Activated B cell treated with CpG ODN at 0.5 μM for 24 hours (primary cell): ENCODE measurements at regions of chr14 and their contacts with region 1.

Region 1: DNA sequence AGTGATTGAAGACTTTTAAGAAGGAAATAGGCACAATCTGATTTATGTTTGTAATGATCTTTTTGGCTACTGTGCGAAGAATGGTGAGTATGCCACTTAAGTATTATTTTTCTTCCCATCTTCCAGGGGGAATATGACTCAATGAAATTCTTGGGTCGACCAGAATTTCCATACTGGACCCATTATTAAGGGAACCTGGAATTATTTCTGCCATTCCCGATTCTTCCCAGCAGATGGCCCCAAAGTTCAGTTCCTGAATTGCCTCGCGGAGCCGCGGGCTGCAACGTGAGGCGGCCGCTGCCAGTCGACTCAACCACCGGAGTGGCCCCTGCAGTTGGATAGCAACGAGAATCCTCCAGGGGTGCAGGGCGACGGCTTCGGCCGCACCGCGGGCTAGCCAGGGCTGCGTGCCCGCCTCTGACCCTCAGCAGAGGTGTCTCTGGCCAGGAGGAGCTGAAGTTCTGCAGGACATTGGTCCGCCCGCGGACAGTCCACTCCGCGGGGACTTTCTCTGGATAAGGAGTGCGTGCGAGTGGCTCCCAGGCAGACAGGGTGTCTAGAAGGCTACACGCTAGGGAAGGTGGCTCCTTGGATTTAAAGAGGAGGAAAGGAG is 628 bp upstream of the TSHR start:
- DNase-seq: peak; percentile 56
- ATAC-seq: peak; percentile 57
- H3K4me3 Mint-ChIP-seq: peak overlapping the region; percentile 84
- H3K27ac Mint-ChIP-seq: peak overlapping the region; percentile 36
- H3K4me1 Mint-ChIP-seq: peaks cover 48% of the 10 kb centered on the region
- H3K27me3 Mint-ChIP-seq: peaks cover 9% of the 10 kb centered on the region
- CTCF ChIP-seq: no peak

Region 2: GRCh38 chr14:80941241-80942182 is 13.3 kb before region 1 on chr14 and contains the start of gene CEP128:
- CTCF ChIA-PET with region 1: interaction called, 3 read pairs
- POLR2A ChIA-PET with region 1: interaction called, 9 read pairs
- intact Hi-C with region 1: loop called (anchors 1 kb)
- DNase-seq: peak; percentile 70
- ATAC-seq: peak; percentile 95
- H3K4me3 Mint-ChIP-seq: peak within 1 kb of the TSS; percentile 90
- H3K27ac Mint-ChIP-seq: peak within 1 kb of the TSS; percentile 70
- H3K4me1 Mint-ChIP-seq: peaks cover 32% of the 10 kb centered on the region
- H3K27me3 Mint-ChIP-seq: peaks cover 3% of the 10 kb centered on the region
- CTCF ChIP-seq: no peak
- total RNA-seq, gene CEP128: 21.1 and 25.0 TPM in 2 replicates

Region 3: DNA sequence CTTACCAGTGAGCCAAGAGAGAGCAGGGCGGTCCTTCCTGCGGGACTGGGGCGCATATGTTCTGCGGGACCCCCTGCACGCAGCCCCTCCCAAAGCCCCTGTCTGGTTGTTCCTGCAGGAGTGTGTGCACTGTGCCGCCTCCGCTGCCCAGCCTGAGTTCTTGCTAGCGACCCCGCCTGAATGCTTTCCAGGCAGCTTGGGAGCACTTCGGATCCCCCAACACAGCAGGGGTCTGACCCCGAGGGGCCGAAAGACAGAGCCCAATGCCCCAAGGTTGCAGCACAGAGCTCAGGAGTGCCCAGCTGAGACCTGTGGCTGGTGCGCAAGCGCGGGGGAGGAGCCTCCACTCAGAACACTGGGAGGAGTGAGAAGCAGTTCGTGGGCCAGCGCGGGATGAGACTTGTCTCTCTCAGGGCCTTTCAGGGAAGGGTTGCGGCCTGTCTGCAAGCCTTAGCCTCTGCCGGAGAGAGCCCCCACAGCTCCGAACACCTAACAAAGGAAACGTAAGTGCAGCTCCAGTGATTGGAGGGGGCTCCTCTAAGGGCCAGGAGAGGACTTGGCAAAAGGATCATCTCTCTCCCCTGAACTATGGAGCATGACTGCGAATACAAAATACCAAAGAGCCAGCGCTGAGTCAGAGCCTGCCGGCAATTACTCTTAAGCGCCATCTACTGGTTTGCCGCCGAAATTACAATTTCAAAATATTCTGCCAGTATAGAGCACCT is 215.5 kb after region 1 on chr14:
- CTCF ChIA-PET with region 1: interaction called, 9 read pairs
- POLR2A ChIA-PET with region 1: interaction called, 7 read pairs
- intact Hi-C with region 1: loop called (anchors 1 kb)
- DNase-seq: peak; percentile 79
- ATAC-seq: peak; percentile 98
- H3K4me3 Mint-ChIP-seq: peak overlapping the region; percentile 90
- H3K27ac Mint-ChIP-seq: peak overlapping the region; percentile 97
- H3K4me1 Mint-ChIP-seq: peaks cover 42% of the 10 kb centered on the region
- H3K27me3 Mint-ChIP-seq: no peaks in the 10 kb centered on the region
- CTCF ChIP-seq: peak; percentile 49

Region 4: DNA sequence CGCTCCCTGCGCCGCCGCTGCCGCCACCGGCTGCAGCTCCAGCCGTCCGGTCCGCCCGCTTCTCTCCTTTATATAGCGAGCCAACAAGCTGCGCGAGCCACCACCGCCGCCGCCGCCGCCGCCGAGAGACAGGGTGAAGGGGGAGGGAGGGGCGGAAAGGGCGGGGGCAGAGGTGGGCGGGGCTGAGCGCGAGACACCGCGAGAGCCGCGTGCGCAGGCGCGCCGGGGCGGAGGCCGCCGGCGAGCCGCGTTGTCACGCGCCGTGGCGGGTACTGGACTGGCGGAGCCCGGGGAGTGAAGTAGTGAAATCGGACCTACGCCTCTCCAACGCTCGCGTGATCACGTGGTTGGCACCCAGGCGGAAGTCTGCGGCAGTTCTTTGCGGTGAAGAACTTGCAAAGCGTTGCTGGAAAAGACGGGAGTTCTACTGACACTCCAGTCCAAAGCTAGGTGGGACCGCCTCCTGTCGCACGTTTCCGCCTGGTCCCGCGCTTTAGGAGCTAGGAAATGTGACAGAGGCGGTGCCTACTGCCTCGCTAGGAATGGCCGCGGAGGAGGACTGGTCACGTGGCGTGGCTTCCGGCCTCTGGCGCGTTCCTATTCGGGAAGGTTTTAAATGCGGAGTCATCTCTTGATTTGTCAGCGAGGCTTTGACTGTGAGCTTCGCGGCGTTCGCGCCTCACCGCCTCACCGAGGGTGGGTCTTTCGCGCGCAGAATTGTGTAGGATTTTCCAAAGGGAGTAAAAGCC is 266.2 kb after region 1 on chr14 and contains the start of gene GTF2A1:
- CTCF ChIA-PET with region 1: interaction called, 3 read pairs
- POLR2A ChIA-PET with region 1: interaction called, 7 read pairs
- intact Hi-C with region 1: loop called (anchors 2 kb)
- DNase-seq: peak; percentile 92
- ATAC-seq: peak; percentile 70
- H3K4me3 Mint-ChIP-seq: peak within 1 kb of the TSS; percentile 98
- H3K27ac Mint-ChIP-seq: peak within 1 kb of the TSS; percentile 100
- H3K4me1 Mint-ChIP-seq: peaks cover 35% of the 10 kb centered on the region
- H3K27me3 Mint-ChIP-seq: no peaks in the 10 kb centered on the region
- CTCF ChIP-seq: no peak
- total RNA-seq, gene GTF2A1: 38.5 and 40.9 TPM in 2 replicates

Region 5: GRCh38 chr14:81533536-81534343 is 578.9 kb after region 1 on chr14 and contains the start of gene SEL1L:
- CTCF ChIA-PET with region 1: no interaction called
- POLR2A ChIA-PET with region 1: no interaction called
- intact Hi-C with region 1: loop called (anchors 5 kb)
- DNase-seq: peak; percentile 99
- ATAC-seq: peak; percentile 96
- H3K4me3 Mint-ChIP-seq: peak within 1 kb of the TSS; percentile 96
- H3K27ac Mint-ChIP-seq: peak within 1 kb of the TSS; percentile 85
- H3K4me1 Mint-ChIP-seq: peaks cover 58% of the 10 kb centered on the region
- H3K27me3 Mint-ChIP-seq: no peaks in the 10 kb centered on the region
- CTCF ChIP-seq: no peak
- total RNA-seq, gene SEL1L: 52.9 and 55.4 TPM in 2 replicates

Region 6: GRCh38 chr14:81971911-81972310 is 1017.1 kb after region 1 on chr14:
- CTCF ChIA-PET with region 1: no interaction called
- POLR2A ChIA-PET with region 1: no interaction called
- intact Hi-C with region 1: no loop called
- DNase-seq: no peak
- ATAC-seq: no peak
- H3K4me3 Mint-ChIP-seq: no peak overlapping the region
- H3K27ac Mint-ChIP-seq: no peak overlapping the region
- H3K4me1 Mint-ChIP-seq: no peaks in the 10 kb centered on the region
- H3K27me3 Mint-ChIP-seq: no peaks in the 10 kb centered on the region
- CTCF ChIP-seq: no peak